ENCODE measurements at regions of chr11 and their contacts with region 1.

Region 1: DNA sequence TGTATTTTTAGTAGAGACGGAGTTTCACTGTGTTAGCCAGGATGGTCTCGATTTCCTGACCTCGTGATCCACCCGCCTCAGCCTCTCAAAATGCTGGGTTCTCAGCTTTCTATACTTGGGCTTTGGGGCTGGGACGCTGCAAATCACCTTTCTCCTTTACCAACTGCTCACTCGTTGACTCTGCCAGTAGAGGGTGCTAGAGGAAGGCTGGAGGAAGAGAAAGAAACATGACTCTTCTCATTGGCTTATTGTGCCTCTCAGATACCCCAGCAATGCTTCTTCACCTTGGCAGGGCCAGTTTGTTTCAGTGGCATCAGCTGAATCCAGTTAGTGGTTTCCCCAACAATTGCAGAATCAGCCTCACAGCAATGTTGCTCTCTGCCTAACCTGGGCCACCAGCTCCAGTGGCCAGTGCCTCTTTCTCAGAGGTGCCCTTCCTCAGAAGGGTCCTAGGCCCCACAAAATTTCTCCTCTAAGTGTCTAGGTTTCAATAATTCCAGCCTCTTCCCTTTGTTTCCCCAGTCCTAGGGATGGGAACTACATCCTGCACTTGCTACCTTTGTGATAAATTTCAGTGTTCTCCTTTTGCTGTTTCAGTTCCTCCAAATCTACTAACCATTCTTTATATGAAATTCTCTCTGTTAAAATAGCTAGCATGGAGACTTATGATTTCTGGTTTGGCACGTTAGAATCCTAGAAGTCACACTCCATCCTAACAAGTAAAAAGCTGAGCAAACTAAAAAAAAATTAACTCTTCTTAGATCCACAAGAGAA is 71.5 kb upstream of the VSTM5 start:
- DNase-seq: peak; percentile 59
- H3K4me3 ChIP-seq: no peak overlapping the region
- H3K27ac ChIP-seq: no peak overlapping the region
- H3K4me1 ChIP-seq: no peaks in the 10 kb centered on the region
- H3K27me3 ChIP-seq: peaks cover 0 to 2% of the 10 kb centered on the region in 2 experiments
- CTCF ChIP-seq: peak; percentile 57 to 82
- POLR2A ChIP-seq: no peak

Region 2: DNA sequence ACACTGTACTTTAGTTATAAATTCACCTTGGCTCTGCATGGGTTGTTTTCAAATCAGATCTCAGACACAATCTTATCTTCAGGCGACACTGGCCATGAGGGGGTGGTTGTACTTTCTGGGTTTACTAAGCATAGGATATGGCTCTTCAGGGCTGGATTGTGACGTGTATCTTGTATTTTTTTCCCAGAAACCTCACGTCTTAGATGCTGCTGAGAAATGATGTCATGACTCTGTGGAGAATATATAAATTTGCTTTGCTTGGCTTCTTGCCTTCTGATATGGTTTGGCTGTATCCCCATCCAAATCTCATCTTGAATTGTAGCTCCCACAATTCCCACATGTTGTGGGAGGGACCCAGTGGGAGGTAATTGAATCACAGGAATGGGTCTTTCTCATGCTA is 11.3 kb after region 1 on chr11:
- CTCF ChIA-PET with region 1: interaction called, 22 read pairs
- POLR2A ChIA-PET with region 1: no interaction called
- dilution Hi-C with region 1: no loop called
- intact Hi-C with region 1: no loop called
- DNase-seq: no peak
- H3K4me3 ChIP-seq: no peak overlapping the region
- H3K27ac ChIP-seq: no peak overlapping the region
- H3K4me1 ChIP-seq: no peaks in the 10 kb centered on the region
- H3K27me3 ChIP-seq: no peaks in the 10 kb centered on the region
- CTCF ChIP-seq: no peak
- POLR2A ChIP-seq: no peak

Region 3: GRCh38 chr11:94325681-94326080 is 403.8 kb after region 1 on chr11:
- CTCF ChIA-PET with region 1: interaction called, 3 read pairs
- POLR2A ChIA-PET with region 1: no interaction called
- dilution Hi-C with region 1: no loop called
- intact Hi-C with region 1: loop called (anchors 5 kb)
- DNase-seq: peak; percentile 44
- H3K4me3 ChIP-seq: no peak overlapping the region
- H3K27ac ChIP-seq: no peak overlapping the region
- H3K4me1 ChIP-seq: no peaks in the 10 kb centered on the region
- H3K27me3 ChIP-seq: no peaks in the 10 kb centered on the region
- CTCF ChIP-seq: peak; percentile 33 to 63
- POLR2A ChIP-seq: no peak

Region 4: GRCh38 chr11:94417386-94417987 is 495.6 kb after region 1 on chr11:
- CTCF ChIA-PET with region 1: interaction called, 82 read pairs
- POLR2A ChIA-PET with region 1: no interaction called
- dilution Hi-C with region 1: no loop called
- intact Hi-C with region 1: loop called (anchors 1 kb)
- DNase-seq: peak; percentile 32
- H3K4me3 ChIP-seq: no peak overlapping the region
- H3K27ac ChIP-seq: no peak overlapping the region
- H3K4me1 ChIP-seq: no peaks in the 10 kb centered on the region
- H3K27me3 ChIP-seq: no peaks in the 10 kb centered on the region
- CTCF ChIP-seq: peak; percentile 15 to 24
- POLR2A ChIP-seq: no peak

Region 5: DNA sequence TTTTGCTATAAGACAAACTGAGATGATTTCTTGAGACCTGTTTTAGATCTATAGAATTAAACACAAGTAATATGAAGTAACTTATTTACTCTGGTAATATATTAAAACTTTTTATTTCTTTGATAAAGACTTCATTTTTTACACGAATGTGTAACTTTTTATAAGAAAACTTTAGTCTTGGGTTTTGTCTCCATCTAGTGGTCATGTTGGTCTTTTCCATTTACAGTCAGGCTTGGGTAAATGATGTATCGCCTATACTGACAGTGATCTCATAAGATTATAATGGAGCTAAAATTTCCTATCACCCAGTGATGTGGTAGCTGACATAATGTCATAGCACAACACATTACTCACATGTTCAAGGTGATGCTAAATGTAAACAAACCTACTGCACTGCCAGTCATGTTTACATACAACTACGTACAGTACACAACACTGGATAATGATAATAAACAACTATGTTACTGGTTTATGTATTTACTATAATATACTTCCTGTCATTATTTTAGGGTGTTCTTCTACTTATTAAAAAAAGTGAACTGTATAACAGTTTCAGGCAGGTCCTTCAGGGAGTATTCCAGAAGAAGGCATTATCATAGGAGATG is 582.9 kb after region 1 on chr11:
- CTCF ChIA-PET with region 1: interaction called, 67 read pairs
- POLR2A ChIA-PET with region 1: no interaction called
- dilution Hi-C with region 1: no loop called
- intact Hi-C with region 1: loop called (anchors 1 kb)
- DNase-seq: peak; percentile 66
- H3K4me3 ChIP-seq: no peak overlapping the region
- H3K27ac ChIP-seq: no peak overlapping the region
- H3K4me1 ChIP-seq: no peaks in the 10 kb centered on the region
- H3K27me3 ChIP-seq: peaks cover 0 to 2% of the 10 kb centered on the region in 2 experiments
- CTCF ChIP-seq: peak; percentile 33 to 40
- POLR2A ChIP-seq: no peak